ENCODE measurements at regions of chr3 and their contacts with region 1.

Region 1: DNA sequence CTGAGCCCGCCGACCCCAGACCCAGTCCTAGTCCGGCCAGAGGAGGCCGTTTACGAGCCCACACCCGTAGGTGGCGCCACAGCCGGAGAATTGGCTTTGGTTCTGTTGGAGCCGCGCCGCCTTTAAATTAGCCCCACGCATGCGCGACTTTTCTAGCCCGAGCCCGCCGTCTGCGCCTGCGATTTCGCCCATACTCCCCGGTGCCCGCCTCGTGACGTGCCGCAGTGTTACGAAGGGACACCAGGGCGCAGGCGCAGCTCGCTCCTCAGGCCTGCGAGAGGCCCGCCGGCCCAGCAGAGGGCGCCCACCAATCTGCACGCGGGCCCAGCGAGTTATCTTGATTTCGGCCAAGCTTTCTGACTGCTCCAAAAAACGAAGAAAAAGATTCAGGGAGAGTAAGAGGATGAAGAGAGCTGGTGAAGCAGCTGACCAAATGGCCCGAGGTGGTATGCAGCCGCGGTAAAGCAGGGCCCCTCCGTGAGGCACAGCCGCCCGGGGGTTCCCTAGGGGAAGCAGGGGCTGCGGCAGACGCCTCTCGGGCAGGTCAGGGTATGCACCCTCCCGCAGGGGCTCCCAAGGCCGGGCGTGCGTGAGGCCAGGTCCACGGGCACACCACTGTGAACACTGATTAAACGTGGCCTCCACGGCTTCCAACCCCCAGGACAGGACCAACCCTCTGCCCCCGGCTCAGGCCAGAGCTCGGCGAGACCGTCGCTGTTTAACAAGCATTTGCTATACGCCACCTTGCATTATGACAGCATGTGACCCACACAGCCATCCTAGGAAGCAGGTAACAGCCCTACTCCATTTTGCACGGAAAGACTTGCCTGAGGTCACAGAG is 32.8 kb downstream of the RPN1 start:
- DNase-seq: peak; percentile 99
- H3K4me3 ChIP-seq: peak overlapping the region; percentile 87
- H3K4me3 Mint-ChIP-seq: peak overlapping the region; percentile 87 to 97 (median 96)
- H3K27ac ChIP-seq: peak overlapping the region; percentile 73
- H3K27ac Mint-ChIP-seq: peak overlapping the region; percentile 79 to 97 (median 97)
- H3K4me1 ChIP-seq: peaks cover 21% of the 10 kb centered on the region
- H3K4me1 Mint-ChIP-seq: peaks cover 18 to 33% (median 22%) of the 10 kb centered on the region in 3 donors
- H3K27me3 ChIP-seq: no peaks in the 10 kb centered on the region
- H3K27me3 Mint-ChIP-seq: no peaks in the 10 kb centered on the region

Region 2: DNA sequence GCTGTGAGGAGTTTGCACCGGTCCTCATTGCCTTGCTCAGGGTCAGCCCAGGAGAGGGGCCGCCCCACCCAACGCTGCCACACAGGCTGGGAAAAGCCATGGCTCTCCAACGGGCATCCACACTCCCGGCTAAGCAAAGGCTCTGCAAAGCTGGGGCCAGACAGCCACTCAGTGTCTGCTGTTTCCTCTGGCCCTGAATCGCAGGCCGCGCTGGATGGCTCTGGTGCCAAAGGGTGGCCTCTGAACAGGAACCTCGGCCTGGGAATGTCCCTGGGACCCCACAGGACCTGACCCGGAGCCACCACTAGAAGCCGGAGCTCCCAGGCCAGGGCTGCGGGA is 10.1 kb before region 1 on chr3:
- CTCF ChIA-PET with region 1: interaction called, 34 read pairs
- POLR2A ChIA-PET with region 1: no interaction called
- DNase-seq: no peak
- H3K4me3 ChIP-seq: peak overlapping the region; percentile 61
- H3K4me3 Mint-ChIP-seq: peak overlapping the region in 4 of 7 donors; percentile 5 to 43 (median 24)
- H3K27ac ChIP-seq: no peak overlapping the region
- H3K27ac Mint-ChIP-seq: no peak overlapping the region
- H3K4me1 ChIP-seq: no peaks in the 10 kb centered on the region
- H3K4me1 Mint-ChIP-seq: peaks cover 0 to 2% (median 0%) of the 10 kb centered on the region in 3 donors
- H3K27me3 ChIP-seq: no peaks in the 10 kb centered on the region
- H3K27me3 Mint-ChIP-seq: peaks cover 0 to 5% of the 10 kb centered on the region in 2 donors

Region 3: GRCh38 chr3:128650096-128651050 is 32.6 kb after region 1 on chr3 and contains the start of gene RPN1:
- CTCF ChIA-PET with region 1: interaction called, 16 read pairs
- POLR2A ChIA-PET with region 1: interaction called, 11 read pairs
- DNase-seq: peak; percentile 95 to 98 (median 97)
- H3K4me3 ChIP-seq: peak within 1 kb of the TSS; percentile 81
- H3K4me3 Mint-ChIP-seq: peak within 1 kb of the TSS; percentile 86 to 100 (median 87)
- H3K27ac ChIP-seq: peak within 1 kb of the TSS; percentile 96
- H3K27ac Mint-ChIP-seq: peak within 1 kb of the TSS; percentile 87 to 99 (median 92)
- H3K4me1 ChIP-seq: peaks cover 34% of the 10 kb centered on the region
- H3K4me1 Mint-ChIP-seq: peaks cover 35 to 61% (median 46%) of the 10 kb centered on the region in 3 donors
- H3K27me3 ChIP-seq: no peaks in the 10 kb centered on the region
- H3K27me3 Mint-ChIP-seq: peaks cover 0 to 2% of the 10 kb centered on the region in 2 donors
- total RNA-seq, gene RPN1: 188 to 194 TPM

Region 4: GRCh38 chr3:128680602-128681368 is 63.0 kb after region 1 on chr3:
- CTCF ChIA-PET with region 1: interaction called, 18 read pairs
- POLR2A ChIA-PET with region 1: interaction called, 3 read pairs
- DNase-seq: peak; percentile 94 to 97 (median 96)
- H3K4me3 ChIP-seq: peak overlapping the region; percentile 66
- H3K4me3 Mint-ChIP-seq: peak overlapping the region; percentile 92 to 96 (median 95)
- H3K27ac ChIP-seq: peak overlapping the region; percentile 76
- H3K27ac Mint-ChIP-seq: peak overlapping the region; percentile 93 to 100 (median 98)
- H3K4me1 ChIP-seq: peaks cover 18% of the 10 kb centered on the region
- H3K4me1 Mint-ChIP-seq: peaks cover 19 to 30% (median 26%) of the 10 kb centered on the region in 3 donors
- H3K27me3 ChIP-seq: no peaks in the 10 kb centered on the region
- H3K27me3 Mint-ChIP-seq: no peaks in the 10 kb centered on the region

Region 5: DNA sequence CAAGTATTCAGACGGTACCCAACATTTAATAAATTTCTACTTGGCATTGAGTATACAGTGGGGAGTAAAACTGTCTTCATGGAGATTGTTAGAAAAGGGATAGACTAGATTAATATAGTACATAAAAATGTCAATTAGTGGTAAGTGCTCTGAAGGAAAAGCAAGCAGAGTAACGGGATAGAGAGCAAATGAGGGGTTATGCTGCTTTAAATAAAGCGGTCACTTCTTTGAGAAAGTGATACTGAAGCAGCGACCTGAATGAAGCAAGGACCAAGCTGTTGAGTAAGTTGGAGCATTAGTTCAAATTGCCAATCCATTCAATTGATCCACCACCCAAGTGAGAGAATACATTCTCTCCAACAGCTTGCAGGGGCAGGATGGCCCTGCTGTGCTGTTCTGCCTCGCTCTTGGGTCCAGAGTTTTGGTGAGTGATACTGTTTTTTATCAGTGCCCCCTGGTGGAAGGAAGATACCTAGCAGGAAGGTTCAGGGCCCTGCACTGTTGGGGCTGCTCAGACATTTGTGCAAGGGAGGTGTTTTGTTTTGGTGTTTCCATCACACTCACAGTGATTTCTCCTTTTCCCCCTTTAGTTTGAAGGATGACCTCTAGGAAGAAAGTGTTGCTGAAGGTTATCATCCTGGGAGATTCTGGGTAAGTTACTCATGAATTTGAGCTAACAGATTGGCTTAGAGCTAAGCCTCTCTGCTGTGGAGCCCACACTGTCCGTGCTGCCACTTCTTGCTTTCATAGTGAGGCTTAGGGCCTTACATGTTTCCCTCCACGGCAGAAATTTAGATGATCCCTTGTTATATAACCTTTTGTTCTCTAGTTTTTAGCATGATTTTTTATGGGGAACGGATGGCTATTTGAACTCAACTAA is 177.2 kb after region 1 on chr3:
- CTCF ChIA-PET with region 1: interaction called, 12 read pairs
- POLR2A ChIA-PET with region 1: interaction called, 3 read pairs
- DNase-seq: peak; percentile 41 to 75 (median 65)
- H3K4me3 ChIP-seq: no peak overlapping the region
- H3K4me3 Mint-ChIP-seq: peak overlapping the region in 1 of 7 donors; percentile 28
- H3K27ac ChIP-seq: no peak overlapping the region
- H3K27ac Mint-ChIP-seq: peak overlapping the region; percentile 3 to 79 (median 70)
- H3K4me1 ChIP-seq: peaks cover 54% of the 10 kb centered on the region
- H3K4me1 Mint-ChIP-seq: peaks cover 34 to 59% (median 59%) of the 10 kb centered on the region in 3 donors
- H3K27me3 ChIP-seq: no peaks in the 10 kb centered on the region
- H3K27me3 Mint-ChIP-seq: no peaks in the 10 kb centered on the region

Region 6: GRCh38 chr3:128845778-128846485 is 228.2 kb after region 1 on chr3:
- CTCF ChIA-PET with region 1: interaction called, 18 read pairs
- POLR2A ChIA-PET with region 1: no interaction called
- DNase-seq: peak; percentile 69 to 84 (median 70)
- H3K4me3 ChIP-seq: peak overlapping the region; percentile 54
- H3K4me3 Mint-ChIP-seq: peak overlapping the region; percentile 46 to 95 (median 83)
- H3K27ac ChIP-seq: peak overlapping the region; percentile 29
- H3K27ac Mint-ChIP-seq: peak overlapping the region in 7 of 8 donors; percentile 27 to 90 (median 79)
- H3K4me1 ChIP-seq: peaks cover 11% of the 10 kb centered on the region
- H3K4me1 Mint-ChIP-seq: peaks cover 8 to 13% (median 12%) of the 10 kb centered on the region in 3 donors
- H3K27me3 ChIP-seq: no peaks in the 10 kb centered on the region
- H3K27me3 Mint-ChIP-seq: no peaks in the 10 kb centered on the region

Region 7: DNA sequence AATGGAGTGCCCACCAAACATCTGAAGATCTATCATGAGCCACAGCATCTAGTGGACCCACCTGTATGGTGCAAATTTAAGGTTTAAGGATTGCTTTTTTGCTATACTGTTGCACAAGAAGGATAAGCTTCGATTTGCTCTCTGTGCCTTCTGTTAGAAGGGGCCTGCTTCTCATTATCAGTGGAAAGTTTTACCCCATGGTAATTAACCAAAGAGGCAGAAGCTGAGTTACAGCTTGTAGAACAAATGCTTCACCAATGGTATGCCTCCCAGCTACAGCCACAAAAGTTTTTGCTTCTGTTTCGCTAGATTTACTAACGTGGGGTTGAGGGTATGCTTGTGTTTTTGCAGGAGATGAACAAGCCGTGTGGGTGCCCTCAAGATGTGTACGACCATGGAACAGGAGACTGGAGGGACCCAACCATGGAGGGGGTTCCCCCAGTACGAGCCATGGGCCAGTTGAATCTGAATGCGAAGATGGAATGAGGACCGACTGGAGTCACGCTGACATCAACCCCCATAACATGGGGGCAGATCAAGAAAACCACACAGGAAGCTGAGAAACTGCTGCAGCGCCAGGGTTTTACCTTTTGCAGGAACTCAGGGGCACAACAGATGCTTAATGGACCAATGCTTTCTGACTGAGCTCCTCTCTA is 305.2 kb after region 1 on chr3:
- CTCF ChIA-PET with region 1: interaction called, 15 read pairs
- POLR2A ChIA-PET with region 1: no interaction called
- DNase-seq: peak; percentile 6 to 79 (median 50)
- H3K4me3 ChIP-seq: peak overlapping the region; percentile 60
- H3K4me3 Mint-ChIP-seq: peak overlapping the region; percentile 74 to 92 (median 84)
- H3K27ac ChIP-seq: no peak overlapping the region
- H3K27ac Mint-ChIP-seq: peak overlapping the region; percentile 74 to 97 (median 90)
- H3K4me1 ChIP-seq: peaks cover 23% of the 10 kb centered on the region
- H3K4me1 Mint-ChIP-seq: peaks cover 24 to 35% (median 28%) of the 10 kb centered on the region in 3 donors
- H3K27me3 ChIP-seq: no peaks in the 10 kb centered on the region
- H3K27me3 Mint-ChIP-seq: no peaks in the 10 kb centered on the region

Measured in CD8-positive, alpha-beta memory T cell (primary cell).